ENCODE measurements at regions of chr19 and their contacts with region 1.

Region 1: DNA sequence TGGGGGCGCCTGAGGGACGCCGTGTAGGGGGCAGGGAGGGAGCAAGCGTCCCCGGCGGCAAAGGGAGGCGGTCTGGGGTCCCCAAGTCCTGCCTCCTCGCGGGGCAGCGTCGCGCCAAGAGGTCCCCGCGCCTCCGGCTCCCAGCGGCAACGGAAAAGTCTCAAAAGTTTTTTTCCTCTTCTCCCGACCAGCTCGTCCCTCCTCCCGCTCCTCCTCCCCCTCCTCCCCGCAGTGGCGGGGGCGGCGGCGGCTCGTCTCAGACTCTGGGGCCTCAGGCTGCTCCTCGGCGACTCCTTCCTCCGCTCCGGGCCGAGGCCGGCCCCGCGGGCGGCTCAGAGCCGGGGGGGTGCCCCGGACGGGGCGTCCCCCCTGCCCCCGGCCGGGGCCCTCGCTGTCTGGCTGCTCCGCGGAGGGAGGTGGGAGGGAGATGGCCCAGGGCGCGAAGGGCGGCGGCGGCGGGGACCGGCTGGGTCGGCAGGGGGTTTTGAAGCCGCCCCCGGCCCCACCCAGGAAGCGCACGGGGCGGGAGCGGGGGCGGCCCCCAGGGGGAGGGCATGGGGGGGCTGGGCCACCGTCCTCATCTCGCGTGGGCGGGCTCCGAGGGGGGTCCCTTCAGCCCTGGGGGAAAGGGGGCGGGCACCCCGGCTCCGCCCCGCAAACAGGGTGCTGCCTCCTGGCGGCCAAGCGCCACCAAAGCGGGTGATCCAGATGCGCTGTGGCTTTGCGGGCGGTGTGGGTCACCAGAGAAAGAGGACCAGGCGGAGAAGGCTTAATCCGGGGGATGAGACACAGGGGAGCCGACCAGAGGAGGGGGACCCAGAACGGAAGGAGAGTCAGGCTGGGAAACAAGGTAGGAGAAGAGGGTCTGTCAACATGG is at the start of gene TGFB1:
- DNase-seq: peak; percentile 25
- H3K4me3 ChIP-seq: peak within 1 kb of the TSS; percentile 96
- H3K27me3 ChIP-seq: no peaks in the 10 kb centered on the region
- CTCF ChIP-seq: peak; percentile 96
- polyA plus RNA-seq, gene TGFB1: 7.3 and 11.2 TPM in 2 replicates

Region 2: GRCh38 chr19:41321600-41322270 is 32.0 kb before region 1 on chr19:
- CTCF ChIA-PET with region 1: interaction called, 69 read pairs
- POLR2A ChIA-PET with region 1: interaction called, 4 read pairs
- DNase-seq: no peak
- H3K4me3 ChIP-seq: no peak overlapping the region
- H3K27me3 ChIP-seq: no peaks in the 10 kb centered on the region
- CTCF ChIP-seq: peak; percentile 86

Region 3: DNA sequence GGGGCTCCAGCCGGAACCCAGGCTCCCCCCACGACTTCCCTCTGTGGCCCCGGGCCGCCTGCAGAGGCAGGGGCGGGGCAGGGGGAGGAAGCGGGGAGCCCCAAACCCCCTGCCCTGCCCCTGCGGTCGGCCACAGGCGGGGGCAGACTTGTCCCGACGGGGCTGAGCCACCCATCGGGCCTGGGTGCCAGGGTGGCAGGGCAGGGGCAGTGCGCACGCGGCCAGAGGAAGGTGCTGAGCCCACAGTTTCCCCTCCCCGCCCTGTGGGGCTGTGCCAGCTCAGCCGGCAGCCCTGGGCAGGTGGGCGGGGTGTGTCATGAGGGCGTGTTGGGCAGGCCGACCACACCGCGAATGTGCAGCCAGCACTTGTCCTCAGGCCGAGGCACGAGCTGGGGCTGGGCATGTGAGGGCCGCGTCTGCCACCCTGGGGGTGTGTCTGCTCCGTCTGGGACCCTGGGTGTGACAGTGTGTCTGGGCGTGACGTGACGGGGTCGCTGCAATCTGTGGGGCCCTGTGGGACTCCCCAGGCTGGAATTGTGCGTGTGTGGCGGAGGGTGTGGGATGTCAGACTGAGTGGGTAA is 26.0 kb before region 1 on chr19:
- CTCF ChIA-PET with region 1: interaction called, 69 read pairs
- POLR2A ChIA-PET with region 1: interaction called, 4 read pairs
- DNase-seq: no peak
- H3K4me3 ChIP-seq: no peak overlapping the region
- H3K27me3 ChIP-seq: no peaks in the 10 kb centered on the region
- CTCF ChIP-seq: no peak

Region 4: GRCh38 chr19:41363753-41364523 is 10.2 kb after region 1 on chr19 and contains the start of gene B9D2:
- CTCF ChIA-PET with region 1: interaction called, 14 read pairs
- POLR2A ChIA-PET with region 1: interaction called, 8 read pairs
- DNase-seq: peak; percentile 89
- H3K4me3 ChIP-seq: peak within 1 kb of the TSS; percentile 60
- H3K27me3 ChIP-seq: no peaks in the 10 kb centered on the region
- CTCF ChIP-seq: no peak
- polyA plus RNA-seq, gene B9D2: 6.6 and 10.9 TPM in 2 replicates

Region 5: DNA sequence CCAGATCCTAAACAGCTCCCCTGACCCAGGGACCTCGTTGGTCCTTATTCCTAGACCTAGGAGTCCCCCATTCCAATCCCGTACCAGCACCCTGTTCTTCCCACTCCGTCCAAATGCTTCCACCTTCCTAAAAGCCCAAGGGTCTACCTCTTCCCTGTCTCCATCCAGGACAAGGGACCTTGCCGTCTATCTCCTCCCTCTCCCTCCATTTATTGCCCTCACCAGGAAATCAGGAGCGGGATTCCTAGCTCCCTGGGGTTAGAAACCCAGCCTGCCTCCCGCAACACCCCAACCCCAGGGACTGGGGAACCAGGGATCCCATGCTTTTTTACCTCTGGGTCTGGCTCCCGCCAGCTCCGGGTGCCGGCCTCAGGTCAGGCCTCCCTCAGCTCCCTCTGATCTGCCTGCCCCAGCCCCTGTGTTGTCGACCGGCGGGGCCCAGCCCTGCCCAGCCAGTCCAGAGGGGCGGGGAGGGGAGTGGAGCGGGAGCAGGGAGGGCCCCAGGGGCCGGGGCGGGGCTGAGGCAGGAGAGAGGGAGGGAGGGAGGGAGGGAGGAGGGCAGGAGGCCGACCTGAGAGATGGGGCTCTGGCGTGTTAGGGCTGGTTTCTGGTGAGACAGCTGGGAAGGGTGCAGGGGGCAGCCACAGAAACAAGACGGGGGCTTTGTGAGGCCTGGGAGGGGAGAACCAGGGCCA is 73.4 kb after region 1 on chr19 and contains the start of gene B3GNT8:
- CTCF ChIA-PET with region 1: interaction called, 5 read pairs
- POLR2A ChIA-PET with region 1: interaction called, 13 read pairs
- DNase-seq: no peak
- H3K4me3 ChIP-seq: peak within 1 kb of the TSS; percentile 52
- H3K27me3 ChIP-seq: no peaks in the 10 kb centered on the region
- CTCF ChIP-seq: no peak
- polyA plus RNA-seq, gene B3GNT8: 0.36 and 0.40 TPM in 2 replicates